Testis (tissue), 5 donors: ENCODE measurements at regions of chr3 and their contacts with region 1.

Region 1: GRCh38 chr3:146218880-146219866 is 31.7 kb downstream of the PLSCR4 start:
- DNase-seq: peak; percentile 53
- H3K4me3 ChIP-seq: no peak overlapping the region
- H3K27ac ChIP-seq: no peak overlapping the region
- H3K4me1 ChIP-seq: no peaks in the 10 kb centered on the region
- H3K27me3 ChIP-seq: no peaks in the 10 kb centered on the region
- CTCF ChIP-seq: peak; percentile 72 to 84 (median 77)
- POLR2A ChIP-seq: no peak

Region 2: GRCh38 chr3:146326670-146327543 is 107.7 kb after region 1 on chr3:
- intact Hi-C with region 1: loop called (anchors 10 kb)
- DNase-seq: peak; percentile 68
- H3K4me3 ChIP-seq: no peak overlapping the region
- H3K27ac ChIP-seq: no peak overlapping the region
- H3K4me1 ChIP-seq: no peaks in the 10 kb centered on the region
- H3K27me3 ChIP-seq: no peaks in the 10 kb centered on the region
- CTCF ChIP-seq: peak; percentile 41 to 77 (median 73)
- POLR2A ChIP-seq: no peak

Region 3: GRCh38 chr3:146589899-146590508 is 370.8 kb after region 1 on chr3:
- intact Hi-C with region 1: loop called (anchors 10 kb)
- DNase-seq: peak; percentile 69
- H3K4me3 ChIP-seq: no peak overlapping the region
- H3K27ac ChIP-seq: no peak overlapping the region
- H3K4me1 ChIP-seq: no peaks in the 10 kb centered on the region
- H3K27me3 ChIP-seq: no peaks in the 10 kb centered on the region
- CTCF ChIP-seq: peak; percentile 39 to 52 (median 47)
- POLR2A ChIP-seq: no peak